ENCODE measurements at regions of chr12 and their contacts with region 1.

Region 1: DNA sequence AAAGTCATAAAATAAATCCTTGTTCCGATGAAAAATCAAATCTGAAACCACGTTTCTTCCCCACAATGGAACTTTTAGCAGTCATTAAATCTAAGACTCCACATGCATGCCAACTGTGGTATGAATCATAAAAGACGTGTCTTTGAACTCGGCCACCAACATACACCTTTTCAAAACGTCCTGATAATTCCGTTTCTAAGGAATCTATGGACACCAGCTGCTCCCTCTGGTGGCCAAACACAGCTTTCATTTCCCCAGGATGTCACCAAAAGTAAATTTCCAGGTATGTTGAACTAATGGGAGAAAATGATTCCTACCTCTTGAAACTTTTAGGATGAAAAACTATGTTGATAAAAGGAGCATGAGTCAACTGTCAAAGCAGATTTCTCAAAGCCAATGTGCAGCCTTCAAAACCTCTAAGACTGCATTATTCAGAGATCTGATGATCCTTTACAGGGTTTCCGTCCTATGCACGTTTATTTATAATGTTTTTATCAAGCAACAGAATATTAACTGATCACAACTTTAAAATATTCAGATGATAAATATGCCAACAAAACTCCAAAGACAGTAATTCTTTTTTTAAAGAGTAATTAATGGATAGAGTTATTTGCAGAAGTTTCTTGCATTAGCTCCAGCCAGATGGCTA is 96.2 kb downstream of the CIT start:
- DNase-seq: no peak
- H3K4me3 ChIP-seq: peak overlapping the region; percentile 31; the same call in 1 of the 2 replicates
- CTCF ChIP-seq: peak; percentile 70

Region 2: DNA sequence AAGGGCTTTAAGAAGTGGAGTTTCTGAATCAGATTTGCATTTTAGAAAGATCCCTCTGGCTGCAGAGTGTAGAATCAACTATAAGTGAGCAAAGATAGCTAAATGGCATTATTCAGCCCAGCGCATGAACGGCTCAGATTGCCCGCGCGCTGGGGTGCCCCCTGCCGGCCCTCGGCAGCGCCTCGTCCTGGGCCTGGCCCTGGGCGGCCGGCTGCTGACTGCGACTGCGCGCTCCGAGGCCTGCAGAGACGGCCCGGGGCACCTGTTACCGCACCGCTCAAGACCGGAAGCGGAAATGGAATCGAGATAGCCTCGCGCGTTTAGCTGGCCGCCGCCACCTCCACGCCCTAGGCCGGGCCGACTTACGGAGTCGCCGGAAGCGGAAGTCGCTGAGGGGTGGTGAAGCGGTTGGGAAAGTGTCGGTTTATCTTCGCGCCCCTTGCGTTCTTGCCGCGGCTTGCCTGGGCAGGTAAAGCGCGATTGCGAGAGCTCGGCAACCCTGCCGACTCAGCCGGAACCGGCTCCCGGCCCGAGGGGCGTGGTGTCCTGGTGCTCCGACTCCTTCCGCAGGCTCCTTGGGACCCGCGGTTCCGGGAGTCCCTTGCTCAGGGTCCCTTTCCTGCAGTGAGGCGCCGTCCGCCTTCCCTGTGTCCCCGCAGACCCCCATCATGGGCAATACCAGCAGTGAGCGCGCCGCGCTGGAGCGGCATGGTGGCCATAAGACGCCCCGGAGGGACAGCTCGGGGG is 113.2 kb before region 1 on chr12 and contains the start of gene PRKAB1:
- CTCF ChIA-PET with region 1: interaction called, 14 read pairs
- POLR2A ChIA-PET with region 1: no interaction called
- DNase-seq: peak; percentile 73
- H3K4me3 ChIP-seq: peak within 1 kb of the TSS; percentile 99
- CTCF ChIP-seq: peak; percentile 94

Region 3: DNA sequence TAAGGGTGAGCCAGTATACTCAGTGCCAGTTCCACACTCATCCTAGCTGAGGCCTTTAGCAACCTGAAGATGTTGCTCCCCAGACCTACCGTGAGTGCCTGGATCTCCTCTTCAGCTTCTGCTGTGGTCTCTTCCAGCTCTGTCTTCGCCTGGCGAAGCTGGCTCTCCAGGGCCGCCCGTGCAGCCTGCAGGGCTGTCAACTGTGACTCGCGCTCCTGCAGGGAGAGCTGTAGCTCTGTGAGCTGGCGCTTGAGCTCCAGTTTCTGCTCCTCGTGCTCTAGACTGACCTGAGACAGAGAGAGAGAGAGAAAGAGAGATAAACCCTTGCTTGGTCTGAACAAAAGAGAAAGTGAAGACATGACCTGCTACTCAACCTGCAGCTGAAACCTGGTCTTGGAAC is 28.9 kb before region 1 on chr12:
- CTCF ChIA-PET with region 1: interaction called, 24 read pairs
- POLR2A ChIA-PET with region 1: no interaction called
- DNase-seq: no peak
- H3K4me3 ChIP-seq: no peak overlapping the region
- CTCF ChIP-seq: no peak

Region 4: GRCh38 chr12:119804011-119804641 is 23.2 kb after region 1 on chr12:
- CTCF ChIA-PET with region 1: interaction called, 152 read pairs
- POLR2A ChIA-PET with region 1: no interaction called
- DNase-seq: no peak
- H3K4me3 ChIP-seq: peak overlapping the region; percentile 60
- CTCF ChIP-seq: peak; percentile 38

Region 5: DNA sequence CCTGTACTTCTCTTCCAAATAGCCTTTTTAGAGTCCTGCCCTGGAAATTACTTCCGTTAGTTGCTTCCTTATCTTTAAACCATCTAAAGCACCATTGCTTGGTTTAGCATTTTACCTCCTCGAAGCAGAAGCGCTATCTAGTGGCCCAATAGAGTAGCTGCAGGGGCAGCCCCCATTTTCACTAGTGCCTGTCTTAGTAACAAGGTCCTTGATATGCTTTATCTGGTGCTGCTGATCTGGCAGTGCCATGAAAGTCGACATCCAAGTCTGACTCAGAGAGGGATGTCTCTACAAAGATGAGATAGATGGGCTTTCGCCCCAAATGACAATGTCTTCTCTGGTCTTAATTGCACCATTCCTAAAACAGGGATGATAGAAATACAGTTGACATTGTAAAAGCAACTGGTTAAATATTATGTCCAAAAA is 121.2 kb after region 1 on chr12:
- CTCF ChIA-PET with region 1: interaction called, 17 read pairs
- POLR2A ChIA-PET with region 1: no interaction called
- DNase-seq: peak; percentile 33
- H3K4me3 ChIP-seq: no peak overlapping the region
- CTCF ChIP-seq: peak; percentile 85

Region 6: GRCh38 chr12:120067084-120067869 is 286.4 kb after region 1 on chr12:
- CTCF ChIA-PET with region 1: no interaction called
- POLR2A ChIA-PET with region 1: no interaction called
- DNase-seq: no peak
- H3K4me3 ChIP-seq: no peak overlapping the region
- CTCF ChIP-seq: no peak